Left colon (tissue), 2 donors: ENCODE measurements at regions of chr3 and their contacts with region 1.

Region 1: DNA sequence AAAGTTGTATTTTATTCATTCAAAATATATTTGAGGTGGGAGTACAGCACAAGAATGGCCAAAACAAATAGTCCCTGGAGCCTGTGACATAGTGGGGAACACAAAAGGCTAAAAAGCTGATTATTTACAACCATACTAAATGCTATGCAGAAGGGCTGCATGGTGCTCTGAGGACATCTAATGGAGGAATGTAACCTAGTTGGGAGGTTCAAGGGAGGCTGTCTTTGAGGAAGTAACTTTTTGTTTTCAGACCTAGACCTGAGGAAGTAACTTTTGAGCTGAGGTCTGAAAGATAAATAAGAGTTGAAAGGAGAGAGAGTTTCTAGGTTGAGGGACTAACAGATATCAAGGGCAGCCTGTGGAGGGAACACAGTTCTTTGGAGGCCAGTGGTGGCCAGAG is 34.8 kb upstream of the RASA2 start:
- DNase-seq: no peak
- ATAC-seq: peak; percentile 78

Region 2: GRCh38 chr3:141311496-141312353 is 140.3 kb before region 1 on chr3:
- intact Hi-C with region 1: loop called in 1 of 2 experiments (anchors 5 kb)
- DNase-seq: peak; percentile 99
- ATAC-seq: peak; percentile 93

Region 3: GRCh38 chr3:141353652-141354495 is 98.2 kb before region 1 on chr3:
- intact Hi-C with region 1: loop called in 1 of 2 experiments (anchors 10 kb)
- DNase-seq: no peak
- ATAC-seq: no peak

Region 4: GRCh38 chr3:141360888-141361598 is 91.0 kb before region 1 on chr3:
- intact Hi-C with region 1: loop called (anchors 2 to 10 kb)
- DNase-seq: no peak
- ATAC-seq: peak; percentile 88